Head of caudate nucleus (tissue), 42 donors: ENCODE measurements at regions of chr6 and their contacts with region 1.

Region 1: DNA sequence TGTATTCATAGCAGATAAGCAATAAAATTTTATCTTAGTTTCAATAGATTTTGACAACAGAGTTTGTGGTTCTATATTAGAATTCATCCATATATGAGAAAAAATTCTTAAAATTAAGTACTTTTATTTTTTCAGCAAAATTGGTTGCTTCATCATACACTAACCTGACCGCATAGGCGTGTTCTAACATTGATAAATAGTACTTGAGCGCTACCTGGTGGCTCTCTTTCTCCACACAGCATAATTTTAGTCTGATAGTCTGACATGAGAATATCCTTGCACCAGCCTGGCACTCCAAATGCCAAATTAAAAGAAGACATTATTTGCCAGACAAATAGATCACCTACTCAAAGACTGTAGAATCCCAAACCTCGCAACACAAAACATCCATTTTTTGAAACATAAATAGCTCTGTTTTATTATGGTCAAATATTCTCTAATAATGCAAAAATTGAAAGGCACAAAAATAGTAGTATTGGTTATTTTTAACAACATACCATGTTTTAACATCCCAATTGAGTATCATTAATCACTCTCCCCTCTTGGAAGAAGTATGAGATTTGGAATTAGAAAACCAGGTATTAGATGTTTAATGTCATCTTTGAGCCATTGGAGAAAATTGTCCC is 33.0 kb upstream of the FILIP1 start:
- DNase-seq: peak in 37 of 42 donors; percentile 4 to 87 (median 59)

Region 2: DNA sequence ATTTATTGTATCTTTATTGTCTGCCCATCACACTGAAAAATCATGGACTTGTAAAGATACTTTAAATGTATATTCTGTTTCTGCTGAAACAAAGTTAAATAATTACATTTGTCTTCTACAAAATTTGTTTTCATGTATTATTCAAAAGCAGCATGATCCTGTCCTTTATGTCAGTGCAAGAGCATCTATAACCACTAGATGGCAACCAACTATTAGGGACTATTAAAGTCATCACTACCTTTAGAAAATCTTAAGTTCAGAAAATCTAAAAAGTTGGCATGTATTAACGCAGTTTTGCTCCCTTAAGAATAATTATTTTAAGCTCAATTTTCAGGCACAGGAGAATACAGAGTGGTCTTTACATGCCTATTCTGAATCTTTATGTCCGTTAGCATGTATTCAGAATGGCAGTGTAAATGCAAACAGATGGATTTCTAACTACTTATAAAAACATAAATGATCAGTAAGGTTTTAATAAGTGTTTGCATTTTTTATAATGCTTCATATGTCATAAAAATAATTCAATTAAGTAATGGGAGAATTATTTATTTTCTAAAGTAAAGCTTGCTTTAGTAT is 259.8 kb before region 1 on chr6:
- intact Hi-C with region 1: loop called (anchors 5 kb)
- DNase-seq: peak in 2 of 42 donors; percentile 10 to 23

Region 3: GRCh38 chr6:75296811-75297779 is 229.5 kb before region 1 on chr6:
- intact Hi-C with region 1: loop called (anchors 5 kb)
- DNase-seq: peak in 4 of 42 donors; percentile 12 to 53 (median 21)

Region 4: DNA sequence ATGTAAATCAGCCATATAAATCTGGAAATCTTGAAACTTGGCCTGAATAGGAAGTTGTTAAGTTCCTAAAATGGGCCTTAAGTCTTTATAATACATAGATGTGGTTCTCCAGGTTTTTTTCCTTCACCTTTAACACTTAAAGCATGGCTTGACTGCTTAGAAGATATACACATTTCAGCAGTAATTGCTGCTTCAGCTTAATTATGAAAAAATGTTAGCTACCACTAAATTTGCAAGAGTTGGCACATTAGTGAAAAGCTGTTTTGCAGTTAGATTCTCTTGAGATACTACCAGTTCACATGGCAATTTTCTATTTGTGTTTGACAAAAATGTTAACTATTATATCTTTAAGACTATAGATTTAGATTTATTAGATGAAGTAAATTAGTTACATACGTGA is 149.8 kb after region 1 on chr6:
- intact Hi-C with region 1: no loop called
- DNase-seq: no peak